ENCODE measurements at regions of chr7 and their contacts with region 1.

Region 1: GRCh38 chr7:94509879-94510581 is 421 bp downstream of the CASD1 start:
- DNase-seq: peak; percentile 22 to 89 (median 76)

Region 2: GRCh38 chr7:94591176-94591575 is 81.1 kb after region 1 on chr7:
- intact Hi-C with region 1: no loop called
- DNase-seq: no peak

Region 3: GRCh38 chr7:94657771-94658693 is 148.0 kb after region 1 on chr7:
- intact Hi-C with region 1: loop called (anchors 5 kb)
- DNase-seq: peak; percentile 77 to 97 (median 93)

Region 4: DNA sequence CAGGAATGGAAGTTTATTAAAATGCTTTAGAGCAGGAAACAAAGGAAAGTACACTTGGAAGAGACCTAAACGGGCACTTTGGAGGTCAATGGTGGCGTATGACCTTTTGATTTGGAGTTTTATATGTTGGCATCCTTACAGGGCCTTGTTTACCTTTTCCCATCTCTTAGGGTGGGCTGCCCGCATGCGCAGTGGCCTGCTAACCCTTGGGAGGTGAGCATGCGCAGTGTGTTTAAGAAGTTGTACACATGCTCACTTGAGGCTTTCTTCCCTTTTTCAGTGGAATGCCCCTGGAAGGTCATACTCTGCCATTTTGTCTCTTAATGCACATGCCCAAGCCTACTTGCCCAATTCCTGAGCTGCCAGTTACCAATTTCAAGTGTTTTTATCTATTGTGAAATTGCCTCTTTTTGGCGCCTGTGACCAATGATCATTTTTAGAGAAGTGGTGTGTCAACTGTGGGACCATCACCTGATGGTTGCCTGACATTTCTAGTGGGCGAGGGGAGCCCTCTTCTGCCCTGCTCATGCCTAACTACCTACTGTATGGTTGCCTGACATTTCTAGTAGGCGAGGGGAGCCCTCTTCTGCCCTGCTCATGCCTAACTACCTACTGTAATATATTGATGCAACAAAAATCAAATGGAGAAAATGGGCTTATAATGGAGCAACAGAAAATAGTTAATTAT is 535.4 kb after region 1 on chr7:
- intact Hi-C with region 1: loop called (anchors 10 kb)
- DNase-seq: peak in 40 of 42 donors; percentile 10 to 82 (median 58)